ENCODE measurements at regions of chr6 and their contacts with region 1.

Region 1: GRCh38 chr6:143961886-143962873 is 45.9 kb downstream of the PLAGL1 start:
- DNase-seq: no peak
- H3K4me3 ChIP-seq: peak overlapping the region in 1 of 4 experiments; percentile 33; a peak in 3 of 8 replicates
- H3K27ac ChIP-seq: no peak overlapping the region
- H3K4me1 ChIP-seq: peaks cover 21 to 72% (median 47%) of the 10 kb centered on the region in 4 experiments
- H3K27me3 ChIP-seq: peaks cover 67 to 98% (median 89%) of the 10 kb centered on the region in 4 experiments
- CTCF ChIP-seq: peak in 2 of 3 experiments; percentile 41 to 49; a peak in 3 of 4 replicates
- EP300 ChIP-seq: no peak
- POLR2A ChIP-seq: no peak
- RAD21 ChIP-seq: peak in 1 of 2 experiments; percentile 43; a peak in 2 of 4 replicates

Region 2: GRCh38 chr6:143973097-143973966 is 11.2 kb after region 1 on chr6:
- CTCF ChIA-PET with region 1: interaction called, 116 read pairs
- POLR2A ChIA-PET with region 1: interaction called, 19 read pairs
- DNase-seq: peak; percentile 57 to 90
- H3K4me3 ChIP-seq: peak overlapping the region in 1 of 4 experiments; percentile 44; a peak in 2 of 8 replicates
- H3K27ac ChIP-seq: no peak overlapping the region
- H3K4me1 ChIP-seq: peaks cover 3 to 15% (median 10%) of the 10 kb centered on the region in 4 experiments; a peak in 5 of 7 replicates
- H3K27me3 ChIP-seq: peaks cover 50 to 68% (median 64%) of the 10 kb centered on the region in 4 experiments
- CTCF ChIP-seq: no peak
- EP300 ChIP-seq: peak in 1 of 2 experiments; percentile 72; a peak in 1 of 3 replicates
- POLR2A ChIP-seq: no peak
- RAD21 ChIP-seq: no peak